ENCODE measurements at regions of chr10 and their contacts with region 1.

Region 1: GRCh38 chr10:47311932-47312662 is 10.2 kb upstream of the GDF2 start:
- DNase-seq: peak; percentile 59 to 87
- H3K4me3 ChIP-seq: no peak overlapping the region
- H3K27ac ChIP-seq: no peak overlapping the region
- H3K4me1 ChIP-seq: peaks cover 0 to 5% (median 0%) of the 10 kb centered on the region in 4 experiments; a peak in 3 of 7 replicates
- H3K27me3 ChIP-seq: no peaks in the 10 kb centered on the region
- CTCF ChIP-seq: peak; percentile 86 to 96 (median 95)
- EP300 ChIP-seq: no peak
- POLR2A ChIP-seq: no peak
- RAD21 ChIP-seq: peak; percentile 96 to 97

Region 2: GRCh38 chr10:46992803-46993561 is 319.1 kb before region 1 on chr10:
- CTCF ChIA-PET with region 1: interaction called, 85 read pairs
- POLR2A ChIA-PET with region 1: no interaction called
- DNase-seq: peak in 1 of 2 experiments; percentile 56
- H3K4me3 ChIP-seq: no peak overlapping the region
- H3K27ac ChIP-seq: no peak overlapping the region
- H3K4me1 ChIP-seq: peaks cover 0 to 6% (median 2%) of the 10 kb centered on the region in 4 experiments; a peak in 3 of 7 replicates
- H3K27me3 ChIP-seq: no peaks in the 10 kb centered on the region
- CTCF ChIP-seq: peak in 2 of 3 experiments; percentile 43 to 60; a peak in 2 of 4 replicates
- EP300 ChIP-seq: no peak
- POLR2A ChIP-seq: no peak
- RAD21 ChIP-seq: peak; percentile 42 to 52; a peak in 3 of 4 replicates

Region 3: DNA sequence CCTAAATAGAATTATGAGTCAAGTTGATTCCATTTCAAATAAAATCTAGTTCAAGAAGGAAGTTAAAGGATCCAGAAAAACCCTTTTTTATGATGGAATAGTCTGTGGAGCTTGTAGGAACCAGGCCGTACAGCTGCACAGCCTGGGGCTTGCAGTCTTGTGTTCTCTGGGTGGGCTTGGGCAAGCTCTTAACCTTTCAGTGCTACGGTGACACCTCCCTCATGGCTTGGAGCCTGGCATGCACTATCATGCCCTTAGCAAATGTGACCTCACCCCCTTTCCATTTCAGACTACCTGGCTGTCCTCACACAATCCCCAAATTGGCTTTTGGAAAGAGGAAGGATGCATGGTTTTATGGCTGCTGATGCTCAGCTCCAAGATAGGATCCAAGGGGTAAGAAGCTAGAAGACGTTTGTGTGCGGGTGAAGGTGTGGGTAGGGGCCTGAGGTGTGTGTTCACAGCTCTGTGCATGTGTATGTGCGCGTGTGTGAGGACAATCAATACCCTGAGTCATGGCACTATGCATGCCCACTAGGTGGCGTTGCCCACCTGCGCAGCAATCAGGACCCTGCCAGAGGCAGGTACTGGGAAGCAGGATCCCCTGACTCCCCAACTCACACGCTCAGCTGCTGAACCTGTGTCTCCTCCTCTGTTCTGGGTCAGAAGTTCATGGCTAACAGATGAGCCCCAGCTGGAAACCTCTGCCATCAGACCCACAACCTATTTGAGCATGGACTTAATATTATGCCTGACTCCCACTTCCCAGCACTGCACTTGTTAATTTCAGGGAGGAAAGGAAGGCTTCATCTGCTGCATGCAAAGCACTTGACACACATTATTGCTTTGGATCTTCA is 287.5 kb before region 1 on chr10:
- CTCF ChIA-PET with region 1: interaction called, 180 read pairs
- POLR2A ChIA-PET with region 1: no interaction called
- DNase-seq: peak; percentile 33 to 85
- H3K4me3 ChIP-seq: no peak overlapping the region
- H3K27ac ChIP-seq: no peak overlapping the region
- H3K4me1 ChIP-seq: no peaks in the 10 kb centered on the region
- H3K27me3 ChIP-seq: 0 out of 7 replicates have a peak, but pooled peaks cover 0 to 2% (median 0%) of the 10 kb centered on the region in 4 experiments
- CTCF ChIP-seq: peak; percentile 91 to 98 (median 96)
- EP300 ChIP-seq: no peak
- POLR2A ChIP-seq: no peak
- RAD21 ChIP-seq: peak; percentile 91 to 94

Region 4: GRCh38 chr10:47107007-47107747 is 204.9 kb before region 1 on chr10:
- CTCF ChIA-PET with region 1: interaction called, 10 read pairs
- POLR2A ChIA-PET with region 1: no interaction called
- DNase-seq: peak in 1 of 2 experiments; percentile 28
- H3K4me3 ChIP-seq: no peak overlapping the region
- H3K27ac ChIP-seq: no peak overlapping the region
- H3K4me1 ChIP-seq: no peaks in the 10 kb centered on the region
- H3K27me3 ChIP-seq: no peaks in the 10 kb centered on the region
- CTCF ChIP-seq: no peak
- EP300 ChIP-seq: no peak
- POLR2A ChIP-seq: no peak
- RAD21 ChIP-seq: no peak

Region 5: DNA sequence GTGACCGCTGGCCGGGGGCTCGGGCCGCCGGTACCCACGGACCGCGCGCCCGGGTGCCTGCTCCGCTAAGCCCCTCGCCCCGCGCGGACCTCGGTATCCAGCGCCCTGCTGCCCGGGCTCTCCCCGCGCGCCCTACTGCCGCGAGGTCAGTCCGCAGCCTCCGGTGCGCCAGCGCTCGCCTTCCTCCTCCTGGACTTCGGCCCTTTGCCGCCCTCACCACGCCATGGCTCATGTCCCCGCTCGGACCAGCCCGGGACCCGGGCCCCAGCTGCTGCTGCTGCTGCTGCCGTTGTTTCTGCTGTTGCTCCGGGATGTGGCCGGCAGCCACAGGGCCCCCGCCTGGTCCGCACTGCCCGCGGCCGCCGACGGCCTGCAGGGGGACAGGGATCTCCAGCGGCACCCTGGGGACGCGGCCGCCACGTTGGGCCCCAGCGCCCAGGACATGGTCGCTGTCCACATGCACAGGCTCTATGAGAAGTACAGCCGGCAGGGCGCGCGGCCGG is 11.6 kb before region 1 on chr10:
- CTCF ChIA-PET with region 1: interaction called, 18 read pairs
- POLR2A ChIA-PET with region 1: interaction called, 3 read pairs
- DNase-seq: peak in 1 of 2 experiments; percentile 63
- H3K4me3 ChIP-seq: peak overlapping the region; percentile 45 to 64 (median 49)
- H3K27ac ChIP-seq: no peak overlapping the region
- H3K4me1 ChIP-seq: peaks cover 0 to 4% (median 2%) of the 10 kb centered on the region in 4 experiments; a peak in 1 of 7 replicates
- H3K27me3 ChIP-seq: peaks cover 4 to 42% (median 34%) of the 10 kb centered on the region in 4 experiments
- CTCF ChIP-seq: peak; percentile 17 to 35 (median 21); a peak in 3 of 4 replicates
- EP300 ChIP-seq: no peak
- POLR2A ChIP-seq: no peak
- RAD21 ChIP-seq: 0 out of 4 replicates have a peak, but pooled peaks of 1 of the 2 experiments have one; percentile 5

Region 6: DNA sequence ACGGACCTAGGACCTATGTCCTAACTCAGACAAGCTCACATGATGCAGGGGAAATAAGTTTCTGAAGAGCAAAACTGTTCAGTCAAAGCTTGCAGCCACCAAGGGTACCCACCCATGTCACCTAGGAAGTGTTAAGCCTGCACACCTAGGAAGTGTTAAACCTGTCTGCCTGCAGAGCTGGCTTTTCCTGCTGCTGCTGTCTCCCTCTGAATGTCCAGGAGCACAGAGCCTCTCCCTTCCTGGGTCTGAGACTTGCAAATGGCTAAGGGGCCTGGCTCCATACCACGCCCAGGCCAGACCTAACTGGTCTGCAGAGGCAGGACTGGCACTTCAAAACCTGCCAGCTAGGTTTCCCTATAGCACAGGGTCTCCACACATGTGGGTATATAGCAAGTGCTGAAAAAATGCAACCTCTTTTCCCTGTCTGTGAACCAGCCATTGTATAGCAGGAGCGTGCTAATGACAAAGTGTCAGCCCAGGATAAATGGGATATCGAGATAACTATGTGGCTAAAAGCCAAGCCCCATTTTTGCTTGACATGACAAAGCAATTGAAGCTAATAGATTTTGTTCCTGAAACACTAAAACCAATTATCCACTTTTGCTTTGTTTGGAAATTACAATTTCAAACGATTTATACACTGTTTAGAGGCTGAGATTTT is 11.7 kb after region 1 on chr10:
- CTCF ChIA-PET with region 1: interaction called, 17 read pairs
- POLR2A ChIA-PET with region 1: no interaction called
- DNase-seq: no peak
- H3K4me3 ChIP-seq: no peak overlapping the region
- H3K27ac ChIP-seq: no peak overlapping the region
- H3K4me1 ChIP-seq: no peaks in the 10 kb centered on the region
- H3K27me3 ChIP-seq: no peaks in the 10 kb centered on the region; a peak in 2 of 7 replicates
- CTCF ChIP-seq: no peak
- EP300 ChIP-seq: no peak
- POLR2A ChIP-seq: no peak
- RAD21 ChIP-seq: no peak